ENCODE measurements at regions of chr7 and their contacts with region 1.

Region 1: GRCh38 chr7:136009488-136010079 is 32.4 kb upstream of the MTPN start:
- DNase-seq: no peak
- ATAC-seq: no peak
- H3K4me3 Mint-ChIP-seq: no peak overlapping the region
- H3K27ac Mint-ChIP-seq: no peak overlapping the region
- H3K4me1 Mint-ChIP-seq: no peaks in the 10 kb centered on the region
- H3K27me3 Mint-ChIP-seq: peaks cover 6% of the 10 kb centered on the region

Region 2: DNA sequence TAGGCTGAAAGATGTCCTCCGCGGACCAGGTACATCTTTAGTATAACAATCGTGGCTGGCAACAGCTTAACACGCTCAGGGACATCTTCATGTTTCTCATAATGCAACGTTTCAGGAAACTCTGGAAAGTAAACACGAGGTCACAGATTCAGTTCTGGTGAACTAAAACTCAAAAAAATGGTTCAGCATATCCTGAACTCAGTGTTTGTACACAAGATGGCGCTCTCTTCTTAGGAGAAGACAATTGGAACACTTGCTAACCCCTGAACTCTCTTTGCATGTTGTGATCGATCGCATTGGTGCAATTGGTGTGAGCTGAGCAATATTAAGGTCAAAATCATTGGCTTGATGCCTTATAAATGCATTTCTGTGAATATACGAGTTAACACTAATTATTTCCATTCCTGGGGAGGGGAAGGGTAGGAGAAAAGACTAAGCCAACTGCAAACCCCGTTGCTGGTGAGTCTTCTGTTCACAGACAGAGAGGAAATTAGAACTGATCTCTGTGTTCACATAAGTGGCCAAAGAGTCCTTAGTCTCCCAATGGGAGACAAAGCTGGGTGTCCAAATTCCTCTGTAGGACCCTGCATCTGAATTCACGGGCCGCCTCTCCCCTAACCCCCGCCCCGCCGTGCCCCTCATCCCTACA is 208.4 kb before region 1 on chr7:
- CTCF ChIA-PET with region 1: interaction called, 11 read pairs
- POLR2A ChIA-PET with region 1: no interaction called
- DNase-seq: peak; percentile 53
- ATAC-seq: no peak
- H3K4me3 Mint-ChIP-seq: no peak overlapping the region
- H3K27ac Mint-ChIP-seq: no peak overlapping the region
- H3K4me1 Mint-ChIP-seq: peaks cover 5% of the 10 kb centered on the region
- H3K27me3 Mint-ChIP-seq: no peaks in the 10 kb centered on the region

Measured in activated CD8-positive, alpha-beta T cell treated with anti-CD3 and anti-CD28 coated beads, Interleukin-2, amount 10 ng/mL, durations not matched to agents 7 days and 5 days (primary cell).